ENCODE measurements at regions of chr2 and their contacts with region 1.

Region 1: GRCh38 chr2:3423492-3424175 is 44.1 kb downstream of the TRAPPC12 start:
- DNase-seq: peak; percentile 63
- H3K4me3 ChIP-seq: no peak overlapping the region
- H3K27ac ChIP-seq: no peak overlapping the region
- H3K4me1 ChIP-seq: no peaks in the 10 kb centered on the region
- H3K27me3 ChIP-seq: no peaks in the 10 kb centered on the region
- CTCF ChIP-seq: peak; percentile 91 to 99
- POLR2A ChIP-seq: no peak

Region 2: DNA sequence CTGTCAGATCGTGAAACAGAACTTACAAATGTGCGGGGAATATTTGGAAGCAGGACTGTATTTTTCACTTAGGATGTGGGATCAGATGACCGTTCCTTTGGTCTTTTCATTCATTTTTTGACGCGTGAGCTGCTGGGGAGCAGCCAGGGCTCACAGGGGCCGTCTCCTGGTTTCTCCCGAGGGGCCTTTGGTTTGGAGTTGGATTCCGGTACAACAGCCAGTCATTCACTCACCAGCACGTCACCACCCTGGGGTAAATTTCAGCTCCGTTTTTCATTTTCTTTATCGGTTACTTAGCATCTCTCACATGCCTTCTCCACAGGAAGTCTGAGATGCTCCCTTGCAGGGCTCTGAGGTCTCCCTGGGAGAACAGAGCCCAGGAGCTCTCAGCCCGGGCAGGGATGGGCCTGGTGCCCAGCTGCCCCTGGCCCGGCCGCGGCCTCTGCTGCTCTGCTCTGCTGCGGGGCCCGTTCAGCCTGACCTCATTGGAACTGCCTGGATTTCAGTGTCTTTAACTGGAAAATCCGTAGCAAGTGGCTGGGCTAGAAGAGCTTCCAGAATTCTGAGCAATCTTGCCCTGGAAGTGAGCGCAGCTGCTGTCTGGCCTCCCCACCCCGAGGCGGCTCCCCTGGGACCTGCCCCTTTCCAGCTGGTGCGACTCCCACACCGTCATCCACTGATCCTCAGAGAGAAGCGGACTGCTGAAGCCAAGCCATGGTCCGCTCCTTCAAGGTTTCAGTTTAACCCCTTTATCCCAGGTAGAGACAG is 381.6 kb before region 1 on chr2:
- CTCF ChIA-PET with region 1: no interaction called
- POLR2A ChIA-PET with region 1: no interaction called
- dilution Hi-C with region 1: no loop called
- intact Hi-C with region 1: no loop called
- DNase-seq: no peak
- H3K4me3 ChIP-seq: no peak overlapping the region
- H3K27ac ChIP-seq: no peak overlapping the region
- H3K4me1 ChIP-seq: no peaks in the 10 kb centered on the region
- H3K27me3 ChIP-seq: no peaks in the 10 kb centered on the region
- CTCF ChIP-seq: no peak
- POLR2A ChIP-seq: no peak

Region 3: DNA sequence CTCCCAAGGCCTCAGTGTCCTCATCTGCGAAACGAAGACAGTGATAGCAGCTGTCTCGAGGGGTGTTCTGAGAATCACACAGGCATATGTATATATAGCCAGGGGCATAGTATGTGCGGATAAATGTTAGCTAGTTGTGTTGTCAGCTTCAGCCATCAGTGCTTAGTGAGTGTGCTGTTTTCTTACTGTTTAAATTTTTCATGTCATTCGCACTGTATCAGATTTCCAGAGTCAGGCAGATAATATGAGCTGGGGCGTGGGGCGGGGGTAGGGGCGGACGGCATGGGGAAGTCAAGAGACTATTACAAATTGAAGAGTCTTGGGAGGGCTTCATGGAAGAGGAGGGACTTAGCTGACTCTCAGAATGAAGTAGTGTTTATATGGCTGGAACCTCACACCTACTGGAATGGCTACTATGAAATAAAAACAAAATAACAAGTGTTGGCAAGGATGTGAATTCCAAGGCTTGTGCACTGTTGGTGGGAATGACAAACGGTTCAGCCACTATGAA is 37.1 kb before region 1 on chr2:
- CTCF ChIA-PET with region 1: interaction called, 4 read pairs
- POLR2A ChIA-PET with region 1: no interaction called
- dilution Hi-C with region 1: no loop called
- intact Hi-C with region 1: loop called (anchors 2 kb)
- DNase-seq: no peak
- H3K4me3 ChIP-seq: no peak overlapping the region
- H3K27ac ChIP-seq: peak overlapping the region; percentile 22
- H3K4me1 ChIP-seq: peaks cover 19% of the 10 kb centered on the region
- H3K27me3 ChIP-seq: no peaks in the 10 kb centered on the region
- CTCF ChIP-seq: no peak
- POLR2A ChIP-seq: no peak

Region 4: GRCh38 chr2:3442185-3442584 is 18.6 kb after region 1 on chr2:
- CTCF ChIA-PET with region 1: interaction called, 17 read pairs
- POLR2A ChIA-PET with region 1: no interaction called
- dilution Hi-C with region 1: no loop called
- intact Hi-C with region 1: no loop called
- DNase-seq: no peak
- H3K4me3 ChIP-seq: no peak overlapping the region
- H3K27ac ChIP-seq: no peak overlapping the region
- H3K4me1 ChIP-seq: peaks cover 6% of the 10 kb centered on the region
- H3K27me3 ChIP-seq: no peaks in the 10 kb centered on the region
- CTCF ChIP-seq: no peak
- POLR2A ChIP-seq: no peak

Region 5: GRCh38 chr2:3447789-3448317 is 24.2 kb after region 1 on chr2:
- CTCF ChIA-PET with region 1: interaction called, 11 read pairs
- POLR2A ChIA-PET with region 1: no interaction called
- dilution Hi-C with region 1: no loop called
- intact Hi-C with region 1: no loop called
- DNase-seq: peak; percentile 71
- H3K4me3 ChIP-seq: no peak overlapping the region
- H3K27ac ChIP-seq: no peak overlapping the region
- H3K4me1 ChIP-seq: peaks cover 9% of the 10 kb centered on the region
- H3K27me3 ChIP-seq: no peaks in the 10 kb centered on the region
- CTCF ChIP-seq: no peak
- POLR2A ChIP-seq: no peak